Heart right ventricle (tissue), 16 donors: ENCODE measurements at regions of chr3 and their contacts with region 1.

Region 1: GRCh38 chr3:56758539-56758981 is 43.2 kb downstream of the ARHGEF3 start:
- DNase-seq: no peak
- ATAC-seq: peak in 3 of 8 donors; percentile 28 to 67 (median 30)
- H3K4me3 ChIP-seq: peak overlapping the region in 1 of 10 donors; percentile 5
- H3K27ac ChIP-seq: peak overlapping the region in 4 of 10 donors; percentile 0 to 84 (median 28)
- H3K4me1 ChIP-seq: peaks cover 12 to 90% (median 40%) of the 10 kb centered on the region in 9 donors
- H3K27me3 ChIP-seq: no peaks in the 10 kb centered on the region
- CTCF ChIP-seq: no peak

Region 2: GRCh38 chr3:56573501-56573900 is 185.1 kb before region 1 on chr3:
- intact Hi-C with region 1: no loop called
- DNase-seq: no peak
- ATAC-seq: no peak
- H3K4me3 ChIP-seq: no peak overlapping the region
- H3K27ac ChIP-seq: no peak overlapping the region
- H3K4me1 ChIP-seq: no peaks in the 10 kb centered on the region
- H3K27me3 ChIP-seq: no peaks in the 10 kb centered on the region
- CTCF ChIP-seq: no peak

Region 3: GRCh38 chr3:56693750-56694149 is 64.8 kb before region 1 on chr3:
- intact Hi-C with region 1: no loop called
- DNase-seq: no peak
- ATAC-seq: peak; percentile 30 to 77 (median 72)
- H3K4me3 ChIP-seq: no peak overlapping the region
- H3K27ac ChIP-seq: peak overlapping the region in 1 of 10 donors; percentile 76
- H3K4me1 ChIP-seq: peaks cover 0 to 36% (median 0%) of the 10 kb centered on the region in 9 donors
- H3K27me3 ChIP-seq: no peaks in the 10 kb centered on the region
- CTCF ChIP-seq: no peak

Region 4: GRCh38 chr3:56790016-56790821 is 31.7 kb after region 1 on chr3:
- intact Hi-C with region 1: loop called in 4 of 10 experiments (anchors 5 kb)
- DNase-seq: no peak
- ATAC-seq: peak in 7 of 8 donors; percentile 24 to 78 (median 69)
- H3K4me3 ChIP-seq: no peak overlapping the region
- H3K27ac ChIP-seq: peak overlapping the region; percentile 19 to 87 (median 72)
- H3K4me1 ChIP-seq: peaks cover 9 to 93% (median 77%) of the 10 kb centered on the region in 9 donors
- H3K27me3 ChIP-seq: no peaks in the 10 kb centered on the region
- CTCF ChIP-seq: no peak